Right ventricle myocardium superior (tissue), 1 donor: ENCODE measurements at regions of chr11 and their contacts with region 1.

Region 1: DNA sequence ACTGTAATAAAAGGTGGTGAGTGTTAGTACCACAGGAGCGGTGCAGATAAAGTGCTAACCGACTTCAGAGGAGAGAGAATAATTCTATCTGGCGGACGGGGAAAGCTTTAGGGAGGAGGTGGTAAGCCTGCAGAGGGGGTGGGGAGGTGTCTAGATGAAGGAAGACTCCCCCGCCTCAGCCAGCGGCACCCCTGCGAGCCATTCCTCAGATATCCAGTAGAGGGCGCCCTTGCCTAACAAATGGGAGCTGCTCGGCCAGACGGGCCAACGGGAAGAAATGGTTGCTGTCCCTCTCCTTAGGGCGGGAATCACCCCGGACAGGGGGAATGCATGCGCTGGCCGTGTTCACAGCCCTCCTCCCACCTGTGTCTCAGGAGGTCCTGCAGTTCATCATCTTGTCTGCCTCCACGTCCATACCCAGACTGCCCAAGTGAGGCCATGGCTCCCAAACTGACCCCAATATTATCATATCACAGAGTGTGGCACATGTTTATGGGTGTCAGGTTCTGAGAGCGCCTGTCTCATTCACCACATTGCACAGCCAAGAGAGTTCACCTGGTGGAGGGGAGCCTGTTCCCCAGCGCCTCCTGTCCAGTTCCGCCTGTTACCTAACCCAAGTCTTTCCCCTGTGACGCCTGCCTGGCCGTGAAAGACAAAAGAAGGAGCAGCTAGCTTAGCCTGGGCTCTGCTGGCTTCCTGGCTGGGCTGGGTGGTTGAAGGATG is 85.5 kb downstream of the ST3GAL4 start:
- DNase-seq: peak; percentile 81
- ATAC-seq: peak; percentile 69

Region 2: DNA sequence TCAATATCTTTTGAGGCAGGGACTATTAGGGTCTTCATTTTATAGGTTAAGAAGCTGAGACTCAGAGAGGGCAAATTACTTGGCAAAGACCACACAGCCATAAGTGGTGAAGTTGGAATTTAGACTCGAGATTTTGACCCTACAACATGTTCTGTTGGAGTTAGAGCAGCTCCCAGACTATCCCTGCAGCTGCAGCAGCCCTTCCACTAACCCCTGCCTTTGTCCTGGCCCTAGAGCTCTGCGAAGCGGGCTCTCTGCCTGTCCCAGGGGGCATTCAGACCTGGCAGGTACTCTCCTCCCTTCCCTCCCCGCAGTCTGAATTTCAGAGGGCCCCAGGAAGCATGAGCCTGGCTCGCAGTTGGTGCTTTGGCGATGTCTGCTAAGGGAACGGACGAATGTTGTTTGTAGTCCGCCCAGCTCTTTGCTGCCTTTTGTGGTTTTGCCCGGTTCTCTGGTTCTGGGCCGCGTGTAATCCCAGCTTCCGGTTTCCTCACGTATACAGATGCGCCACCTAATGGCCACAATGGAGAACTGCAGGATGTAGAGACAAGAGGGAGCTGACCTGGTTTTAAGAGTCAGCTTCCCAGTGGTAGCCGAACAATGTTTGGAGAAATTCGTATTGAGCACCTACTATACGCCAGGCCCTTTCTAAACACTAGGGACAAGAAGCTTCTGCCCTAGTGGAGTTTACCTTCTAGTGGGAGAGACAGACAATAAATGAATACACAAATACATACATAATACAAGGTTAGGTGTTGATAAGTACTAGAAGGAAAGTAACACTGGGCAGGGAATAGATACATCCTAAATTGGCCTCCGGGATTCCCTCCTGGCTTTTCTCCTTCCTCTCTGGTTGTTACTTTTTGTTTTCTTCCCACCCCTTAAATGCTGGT is 39.7 kb after region 1 on chr11:
- intact Hi-C with region 1: loop called (anchors 5 kb)
- DNase-seq: peak; percentile 86
- ATAC-seq: peak; percentile 95

Region 3: GRCh38 chr11:126538071-126538470 is 97.1 kb after region 1 on chr11:
- intact Hi-C with region 1: no loop called
- DNase-seq: no peak
- ATAC-seq: no peak

Region 4: DNA sequence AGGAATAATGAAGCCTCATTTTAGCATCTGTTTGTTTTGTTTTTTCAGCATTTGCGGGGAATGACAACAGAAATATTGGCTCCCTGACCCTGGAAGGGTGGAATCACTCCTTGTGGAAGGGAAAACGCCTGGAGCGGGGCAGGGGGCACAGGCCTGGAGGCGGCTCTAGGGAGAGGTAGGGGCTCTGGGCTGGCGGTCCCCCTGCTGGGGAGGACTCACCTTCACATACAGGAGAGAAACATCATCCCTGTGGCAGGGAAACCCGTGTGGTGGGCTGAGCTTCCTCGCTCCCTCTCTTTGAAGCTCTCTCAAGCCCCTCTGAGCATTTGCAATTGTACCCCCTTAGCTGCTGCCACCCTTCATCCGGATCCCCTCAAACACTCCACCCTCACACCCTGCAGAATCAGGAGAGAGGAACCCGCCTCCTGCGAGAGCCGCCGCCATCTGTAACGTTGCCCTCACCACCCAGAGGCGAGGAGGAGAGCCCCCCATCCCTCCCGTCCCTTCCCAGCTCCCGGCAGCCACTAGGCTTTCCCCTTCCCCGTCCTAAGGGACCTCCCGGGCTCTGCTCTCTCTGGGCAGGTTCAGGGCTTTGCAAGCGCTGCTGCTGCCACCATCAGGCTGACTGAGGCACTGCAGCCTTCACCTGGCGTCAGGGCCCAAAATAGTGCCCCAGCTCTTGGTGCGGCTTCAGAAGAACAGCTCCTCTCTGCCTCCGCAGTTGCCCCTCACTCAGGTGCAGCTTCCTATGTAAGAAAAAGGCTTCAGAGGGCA is 549.2 kb after region 1 on chr11:
- intact Hi-C with region 1: loop called (anchors 5 kb)
- DNase-seq: peak; percentile 78
- ATAC-seq: peak; percentile 91

Region 5: DNA sequence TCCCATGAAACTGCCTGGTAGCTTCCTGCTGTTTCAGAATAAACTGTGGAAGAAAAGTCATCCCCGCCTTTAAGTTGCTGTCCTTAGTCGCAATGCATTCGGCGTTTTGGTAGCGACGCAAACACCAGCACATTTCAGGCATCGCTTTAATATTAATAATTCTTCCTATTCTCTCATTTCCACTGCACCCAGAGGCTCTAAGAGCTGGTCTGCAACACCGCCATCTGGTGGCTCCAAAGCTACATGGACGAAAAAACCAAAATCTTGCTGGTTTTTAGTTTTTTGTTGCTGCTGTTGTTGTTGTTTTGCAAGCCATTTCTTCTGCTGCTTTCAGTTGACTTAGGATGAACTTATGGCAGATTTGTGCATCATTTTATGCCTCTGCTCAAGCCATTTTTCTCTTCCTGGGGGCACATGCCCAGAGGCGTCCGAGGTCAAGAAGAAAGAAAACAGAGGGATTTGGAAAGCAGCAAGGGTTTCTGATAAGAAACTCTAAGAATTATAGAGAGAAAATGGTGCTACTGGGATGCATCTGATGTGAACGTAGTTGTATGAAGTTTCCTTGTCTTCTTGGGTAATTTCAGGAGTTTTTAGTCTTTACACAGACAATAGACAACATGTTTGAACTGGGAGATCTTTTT is 905.0 kb after region 1 on chr11:
- intact Hi-C with region 1: loop called (anchors 2 kb)
- DNase-seq: peak; percentile 44
- ATAC-seq: no peak